ENCODE measurements at regions of chr7 and their contacts with region 1.

Region 1: GRCh38 chr7:35777121-35777520 is 23.7 kb upstream of the SEPTIN7 start:
- DNase-seq: no peak
- ATAC-seq: no peak
- H3K4me3 Mint-ChIP-seq: no peak overlapping the region
- H3K27ac Mint-ChIP-seq: no peak overlapping the region
- H3K4me1 Mint-ChIP-seq: peaks cover 2% of the 10 kb centered on the region
- H3K27me3 Mint-ChIP-seq: no peaks in the 10 kb centered on the region
- CTCF ChIP-seq: no peak

Region 2: GRCh38 chr7:35761871-35762677 is 15.0 kb before region 1 on chr7:
- CTCF ChIA-PET with region 1: no interaction called
- POLR2A ChIA-PET with region 1: no interaction called
- intact Hi-C with region 1: loop called (anchors 2 kb)
- DNase-seq: no peak
- ATAC-seq: no peak
- H3K4me3 Mint-ChIP-seq: no peak overlapping the region
- H3K27ac Mint-ChIP-seq: no peak overlapping the region
- H3K4me1 Mint-ChIP-seq: peaks cover 7% of the 10 kb centered on the region
- H3K27me3 Mint-ChIP-seq: no peaks in the 10 kb centered on the region
- CTCF ChIP-seq: no peak

Region 3: GRCh38 chr7:35906191-35906908 is 129.2 kb after region 1 on chr7:
- CTCF ChIA-PET with region 1: no interaction called
- POLR2A ChIA-PET with region 1: no interaction called
- intact Hi-C with region 1: no loop called
- DNase-seq: no peak
- ATAC-seq: peak; percentile 96
- H3K4me3 Mint-ChIP-seq: no peak overlapping the region
- H3K27ac Mint-ChIP-seq: peak overlapping the region; percentile 41
- H3K4me1 Mint-ChIP-seq: peaks cover 3% of the 10 kb centered on the region
- H3K27me3 Mint-ChIP-seq: no peaks in the 10 kb centered on the region
- CTCF ChIP-seq: peak; percentile 11

Measured in activated B cell treated with CpG ODN at 0.5 μM for 24 hours (primary cell).